Activated CD8-positive, alpha-beta T cell treated with anti-CD3 and anti-CD28 coated beads, Interleukin-2, amount 10 ng/mL, durations not matched to agents 7 days and 5 days (primary cell): ENCODE measurements at regions of chr3 and their contacts with region 1.

Region 1: GRCh38 chr3:152232679-152233078 is 36.0 kb upstream of the MBNL1 start:
- DNase-seq: no peak
- ATAC-seq: no peak
- H3K4me3 Mint-ChIP-seq: no peak overlapping the region
- H3K27ac Mint-ChIP-seq: no peak overlapping the region
- H3K4me1 Mint-ChIP-seq: peaks cover 63% of the 10 kb centered on the region
- H3K27me3 Mint-ChIP-seq: no peaks in the 10 kb centered on the region

Region 2: DNA sequence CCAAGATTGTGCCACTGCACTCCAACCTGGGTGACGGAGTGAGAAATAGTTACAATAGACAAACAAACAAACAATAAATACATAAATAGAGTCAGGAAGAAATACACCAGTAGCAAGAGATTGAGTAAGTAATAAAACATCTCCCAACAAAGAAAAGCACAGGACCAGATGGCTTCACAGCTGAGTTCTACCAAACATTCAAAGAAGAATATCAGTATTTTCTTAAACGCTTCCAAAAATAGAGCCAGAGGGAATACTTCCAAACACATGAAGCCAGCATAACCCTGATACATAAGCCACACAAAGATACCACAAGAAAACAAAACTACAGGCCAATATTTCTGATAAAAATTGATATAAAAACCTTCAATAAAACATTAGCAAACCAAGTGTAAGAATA is 741.2 kb before region 1 on chr3:
- CTCF ChIA-PET with region 1: no interaction called
- POLR2A ChIA-PET with region 1: no interaction called
- DNase-seq: no peak
- ATAC-seq: no peak
- H3K4me3 Mint-ChIP-seq: no peak overlapping the region
- H3K27ac Mint-ChIP-seq: no peak overlapping the region
- H3K4me1 Mint-ChIP-seq: no peaks in the 10 kb centered on the region
- H3K27me3 Mint-ChIP-seq: no peaks in the 10 kb centered on the region

Region 3: GRCh38 chr3:151999936-152000335 is 232.7 kb before region 1 on chr3:
- CTCF ChIA-PET with region 1: no interaction called
- POLR2A ChIA-PET with region 1: no interaction called
- DNase-seq: no peak
- ATAC-seq: no peak
- H3K4me3 Mint-ChIP-seq: no peak overlapping the region
- H3K27ac Mint-ChIP-seq: no peak overlapping the region
- H3K4me1 Mint-ChIP-seq: no peaks in the 10 kb centered on the region
- H3K27me3 Mint-ChIP-seq: no peaks in the 10 kb centered on the region

Region 4: DNA sequence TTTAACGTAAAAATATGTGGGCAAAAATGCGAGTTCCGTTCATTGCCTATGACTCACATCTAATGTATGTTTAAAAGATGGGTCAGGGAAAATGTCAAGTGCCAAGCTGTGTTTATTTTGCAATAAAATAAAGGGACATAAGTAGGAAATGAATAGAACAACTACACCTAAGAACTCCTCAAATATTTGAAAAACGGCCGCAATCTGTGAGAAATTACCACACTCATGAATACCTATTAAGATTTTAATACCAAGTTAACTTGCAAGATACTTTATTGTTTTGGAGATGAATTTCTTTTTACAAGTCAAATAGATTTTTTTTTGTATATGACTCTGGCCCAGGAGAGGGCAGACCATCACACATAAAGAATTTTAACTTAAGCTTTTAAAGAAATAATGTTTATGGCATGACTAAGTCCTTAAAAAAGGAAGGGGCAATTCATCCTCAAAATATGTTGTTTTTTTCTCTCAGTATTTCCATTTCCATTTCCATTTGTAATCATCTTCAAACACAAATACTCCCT is 206.6 kb before region 1 on chr3:
- CTCF ChIA-PET with region 1: no interaction called
- POLR2A ChIA-PET with region 1: no interaction called
- DNase-seq: no peak
- ATAC-seq: no peak
- H3K4me3 Mint-ChIP-seq: no peak overlapping the region
- H3K27ac Mint-ChIP-seq: no peak overlapping the region
- H3K4me1 Mint-ChIP-seq: no peaks in the 10 kb centered on the region
- H3K27me3 Mint-ChIP-seq: peaks cover 5% of the 10 kb centered on the region

Region 5: DNA sequence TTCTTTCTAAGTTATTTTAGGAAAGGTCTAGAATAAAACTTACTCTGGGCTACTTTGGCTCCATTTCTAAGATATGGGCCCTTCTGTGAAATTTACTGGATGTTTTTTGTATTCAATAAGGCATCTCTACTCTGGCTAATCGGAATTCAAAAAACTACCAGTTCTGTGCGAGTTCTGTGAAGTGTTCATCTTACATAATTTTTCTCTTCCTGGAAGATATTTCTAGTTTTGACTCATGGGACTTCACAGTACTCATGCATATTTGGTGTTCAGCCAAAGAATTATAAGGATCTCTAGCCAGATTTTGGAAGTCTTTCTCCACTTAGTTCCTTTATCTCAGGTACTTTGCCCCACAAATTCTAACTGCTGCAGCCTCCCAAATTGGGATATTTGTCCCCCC is 10.4 kb before region 1 on chr3:
- CTCF ChIA-PET with region 1: interaction called, 10 read pairs
- POLR2A ChIA-PET with region 1: interaction called, 3 read pairs
- DNase-seq: no peak
- ATAC-seq: no peak
- H3K4me3 Mint-ChIP-seq: peak overlapping the region; percentile 51
- H3K27ac Mint-ChIP-seq: peak overlapping the region; percentile 62
- H3K4me1 Mint-ChIP-seq: peaks cover 64% of the 10 kb centered on the region
- H3K27me3 Mint-ChIP-seq: no peaks in the 10 kb centered on the region

Region 6: DNA sequence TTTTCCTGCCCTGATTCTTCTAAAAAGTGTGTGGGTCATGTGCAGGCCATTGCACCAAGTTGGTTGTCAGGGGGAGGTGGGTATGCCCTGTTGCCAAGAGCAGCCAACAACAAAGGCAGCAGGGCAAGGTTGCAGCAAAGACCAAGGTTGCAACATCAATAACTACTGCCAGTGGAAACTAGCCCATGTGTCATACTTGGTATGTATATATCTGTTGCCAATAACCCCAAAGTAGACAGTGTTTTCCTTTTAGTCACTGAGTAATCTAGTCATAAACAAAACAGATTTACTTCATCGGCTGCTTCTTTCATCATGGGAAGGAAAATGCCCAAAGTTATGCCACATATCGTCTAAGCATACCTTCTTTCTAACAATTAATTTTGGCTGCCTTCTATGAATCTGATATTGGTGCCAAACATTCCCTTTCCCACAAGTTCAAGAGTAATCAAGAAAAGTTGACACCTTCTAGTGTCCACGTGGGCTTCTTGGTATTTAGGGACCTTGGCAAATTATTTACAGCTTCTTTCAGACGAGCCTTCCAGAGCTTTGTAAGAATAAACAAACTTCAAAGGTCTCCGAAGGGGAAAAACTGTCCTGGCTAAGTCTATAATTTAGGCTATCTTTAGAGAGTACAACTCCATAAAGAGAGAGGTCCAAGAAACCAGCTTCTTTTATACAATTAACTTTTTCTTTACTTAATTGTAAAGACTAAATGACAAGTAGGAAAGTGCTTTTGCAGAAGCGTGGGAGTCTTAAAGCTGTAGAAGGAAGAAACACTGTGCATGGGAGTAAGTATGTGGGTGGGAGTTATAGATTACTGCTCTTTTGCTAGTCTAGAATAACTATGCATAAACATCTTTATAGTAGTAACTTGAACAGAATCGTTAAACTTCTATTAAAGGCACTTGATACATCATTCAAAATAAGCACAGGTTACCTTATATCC is 26.0 kb after region 1 on chr3:
- CTCF ChIA-PET with region 1: no interaction called
- POLR2A ChIA-PET with region 1: no interaction called
- DNase-seq: peak; percentile 76
- ATAC-seq: peak; percentile 74
- H3K4me3 Mint-ChIP-seq: peak overlapping the region; percentile 71
- H3K27ac Mint-ChIP-seq: peak overlapping the region; percentile 93
- H3K4me1 Mint-ChIP-seq: peaks cover 81% of the 10 kb centered on the region
- H3K27me3 Mint-ChIP-seq: no peaks in the 10 kb centered on the region